ENCODE measurements at regions of chr1 and their contacts with region 1.

Region 1: DNA sequence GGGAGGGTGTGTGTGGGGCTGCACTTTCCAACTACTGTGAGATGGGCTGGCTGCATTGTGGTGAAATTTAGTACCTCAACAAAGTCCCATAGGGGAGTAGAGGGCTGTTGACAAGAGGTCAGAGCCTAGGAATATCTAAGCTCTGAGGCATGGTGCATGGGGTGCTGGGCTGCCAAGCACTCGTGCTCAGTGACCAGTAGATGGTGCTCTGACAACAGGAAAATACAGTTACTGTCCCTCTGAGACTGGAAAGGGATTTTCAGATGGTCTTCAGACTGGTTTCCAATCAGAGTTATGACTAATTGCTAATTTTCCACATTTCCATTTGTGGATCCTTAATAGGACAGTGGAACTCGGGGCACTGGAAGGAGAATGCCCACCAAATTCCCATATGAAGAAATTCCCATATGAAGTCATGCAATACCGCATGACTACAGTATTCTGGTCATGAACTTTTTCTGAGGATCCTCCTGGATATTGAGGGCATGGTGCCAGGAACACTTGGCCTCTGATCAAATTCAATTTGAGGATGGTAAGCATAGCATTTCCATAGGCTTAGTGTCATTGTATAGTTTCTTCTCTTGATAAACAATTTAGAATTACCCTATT is 4.1 kb upstream of the CACNA1E start:
- DNase-seq: peak; percentile 78
- CTCF ChIP-seq: peak; percentile 95

Region 2: DNA sequence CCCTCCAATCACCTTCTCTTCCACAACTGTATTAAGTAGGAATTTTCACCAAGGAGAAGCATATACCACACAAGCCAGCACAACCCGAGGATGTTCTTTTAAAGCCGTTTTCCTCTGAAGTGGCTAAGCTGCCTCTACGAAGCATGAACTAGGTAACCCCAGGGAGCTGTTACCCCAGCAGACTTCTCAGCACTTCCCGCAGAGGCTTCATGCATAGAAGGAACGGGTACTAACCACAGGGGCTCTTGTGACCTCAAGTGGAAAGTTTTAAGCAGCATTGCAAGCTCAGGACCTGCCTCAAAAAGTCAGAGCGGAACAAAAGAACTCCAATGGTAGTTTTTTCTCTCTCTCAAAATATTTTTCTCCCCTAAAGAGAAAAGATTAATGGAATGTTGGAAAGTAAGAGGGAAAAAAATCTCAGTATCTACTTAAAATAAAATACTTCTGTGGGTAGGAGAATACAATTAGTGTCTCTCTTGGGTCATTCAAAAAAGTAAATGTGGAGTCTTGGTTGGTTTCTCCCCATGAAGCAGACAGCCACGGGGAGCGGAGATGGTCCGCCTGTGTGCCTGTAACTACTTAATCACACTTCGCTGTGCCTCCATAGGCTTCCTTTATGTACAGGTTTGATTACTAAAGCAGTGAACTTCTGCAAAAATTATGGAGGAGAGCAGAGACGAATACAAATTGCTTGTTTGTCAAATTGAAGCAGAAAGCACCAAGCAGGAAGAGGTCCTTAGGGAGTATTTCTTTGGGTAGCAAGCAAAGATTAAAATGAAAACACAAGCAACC is 497.4 kb before region 1 on chr1:
- CTCF ChIA-PET with region 1: no interaction called
- POLR2A ChIA-PET with region 1: no interaction called
- DNase-seq: peak; percentile 76
- CTCF ChIP-seq: no peak

Region 3: GRCh38 chr1:181452754-181453153 is 26.5 kb before region 1 on chr1:
- CTCF ChIA-PET with region 1: interaction called, 16 read pairs
- POLR2A ChIA-PET with region 1: no interaction called
- DNase-seq: no peak
- CTCF ChIP-seq: no peak

Region 4: GRCh38 chr1:181497870-181498269 is 18.6 kb after region 1 on chr1:
- CTCF ChIA-PET with region 1: interaction called, 213 read pairs
- POLR2A ChIA-PET with region 1: no interaction called
- DNase-seq: peak; percentile 28
- CTCF ChIP-seq: no peak

Region 5: DNA sequence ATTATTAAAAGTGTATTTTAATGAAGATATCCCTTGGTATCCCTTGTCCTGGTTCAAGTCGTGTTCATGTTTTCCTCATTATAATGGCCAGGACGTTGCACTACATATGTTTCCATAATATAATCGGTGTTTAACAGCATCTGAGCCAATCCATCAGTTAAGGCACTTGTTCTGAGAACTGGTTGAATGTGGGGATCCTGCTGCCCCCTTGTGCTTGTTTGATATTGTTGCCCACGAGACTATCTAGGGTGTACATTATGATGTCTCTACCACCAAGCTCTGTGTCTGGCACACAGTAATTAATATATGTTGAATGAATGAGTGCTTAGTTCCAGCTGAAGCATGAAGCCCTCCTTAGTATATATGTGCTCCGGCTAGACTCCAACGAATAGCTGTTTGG is 197.0 kb after region 1 on chr1:
- CTCF ChIA-PET with region 1: interaction called, 44 read pairs
- POLR2A ChIA-PET with region 1: no interaction called
- DNase-seq: peak; percentile 71
- CTCF ChIP-seq: peak; percentile 39

Region 6: DNA sequence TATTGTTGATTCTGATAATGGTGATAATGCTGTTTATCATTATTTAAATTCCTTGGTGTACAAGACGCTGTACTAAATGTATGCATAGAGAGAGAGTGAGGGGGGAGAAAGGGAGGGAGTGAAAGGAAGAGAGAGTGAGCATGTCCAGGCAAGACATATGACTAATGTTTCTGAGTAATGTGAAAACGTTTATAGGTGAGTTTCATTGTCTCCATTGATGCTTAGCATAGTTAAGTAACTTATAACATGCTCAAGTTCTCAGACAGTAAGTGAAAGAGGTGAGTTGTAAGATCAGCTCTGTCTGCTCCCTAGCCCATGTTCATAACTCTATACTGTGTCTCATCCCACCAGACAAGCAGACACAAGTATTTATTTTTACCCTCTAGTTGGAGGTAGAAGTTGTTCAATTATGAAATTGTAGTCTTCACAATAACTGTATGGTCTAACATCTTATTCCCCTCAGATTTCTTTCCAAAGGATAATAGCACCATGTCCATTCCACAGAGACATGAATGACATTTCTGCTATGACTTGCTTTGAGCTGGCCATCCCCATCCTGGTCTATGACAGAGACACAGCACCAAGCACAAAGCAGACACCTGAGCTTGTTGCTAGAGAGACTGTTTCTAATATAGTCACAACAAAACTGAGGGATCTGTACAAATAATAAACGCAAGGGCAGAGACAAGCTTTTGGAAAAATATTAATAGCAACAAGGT is 289.1 kb after region 1 on chr1:
- CTCF ChIA-PET with region 1: no interaction called
- POLR2A ChIA-PET with region 1: no interaction called
- DNase-seq: peak; percentile 28
- CTCF ChIP-seq: no peak

Region 7: DNA sequence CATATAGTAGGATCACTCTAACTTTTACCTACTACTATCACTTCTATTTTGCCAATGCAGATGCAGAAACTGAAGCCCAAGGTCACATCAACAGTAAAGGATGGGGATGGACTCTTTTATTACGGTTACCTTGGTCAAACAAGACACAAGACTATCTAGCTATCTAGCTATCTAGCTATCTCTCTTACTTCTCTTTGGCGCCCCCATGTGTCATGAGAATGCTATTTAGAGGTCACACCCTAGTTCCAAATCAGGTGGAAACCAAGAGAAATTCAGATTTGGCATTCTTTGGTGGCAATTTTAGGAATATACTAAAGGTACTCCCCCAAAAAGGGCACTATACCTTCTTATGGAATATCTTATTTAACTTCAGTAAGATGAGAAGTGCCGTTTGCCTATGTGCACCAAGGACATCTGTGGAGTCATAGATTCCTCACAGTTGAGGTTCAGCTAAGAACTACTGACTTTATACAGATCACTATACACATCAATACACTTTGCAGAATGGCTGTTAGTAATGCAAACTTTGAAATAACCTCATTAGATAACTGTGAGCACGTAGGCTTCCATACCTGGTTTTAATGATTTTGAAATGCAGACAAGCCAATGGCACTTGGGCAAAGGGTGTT is 575.6 kb after region 1 on chr1:
- CTCF ChIA-PET with region 1: interaction called, 65 read pairs
- POLR2A ChIA-PET with region 1: no interaction called
- DNase-seq: peak; percentile 56
- CTCF ChIP-seq: peak; percentile 81